ENCODE measurements at regions of chr9 and their contacts with region 1.

Region 1: GRCh38 chr9:132800038-132800648 is 77.9 kb downstream of the AK8 start:
- DNase-seq: peak; percentile 60 to 72
- H3K4me3 ChIP-seq: no peak overlapping the region
- H3K4me3 Mint-ChIP-seq: no peak overlapping the region
- H3K27ac Mint-ChIP-seq: no peak overlapping the region
- H3K4me1 ChIP-seq: 0 out of 2 replicates have a peak, but pooled peaks cover 5% of the 10 kb centered on the region
- H3K4me1 Mint-ChIP-seq: no peaks in the 10 kb centered on the region
- H3K27me3 ChIP-seq: no peaks in the 10 kb centered on the region
- H3K27me3 Mint-ChIP-seq: peaks cover 3% of the 10 kb centered on the region
- CTCF ChIP-seq: peak; percentile 81 to 92

Region 2: GRCh38 chr9:132575005-132575609 is 225.0 kb before region 1 on chr9:
- CTCF ChIA-PET with region 1: no interaction called
- POLR2A ChIA-PET with region 1: no interaction called
- intact Hi-C with region 1: loop called (anchors 5 kb)
- DNase-seq: peak; percentile 82 to 85
- H3K4me3 ChIP-seq: no peak overlapping the region
- H3K4me3 Mint-ChIP-seq: no peak overlapping the region
- H3K27ac Mint-ChIP-seq: no peak overlapping the region
- H3K4me1 ChIP-seq: no peaks in the 10 kb centered on the region
- H3K4me1 Mint-ChIP-seq: no peaks in the 10 kb centered on the region
- H3K27me3 ChIP-seq: no peaks in the 10 kb centered on the region
- H3K27me3 Mint-ChIP-seq: peaks cover 26% of the 10 kb centered on the region
- CTCF ChIP-seq: peak; percentile 82 to 86

Region 3: GRCh38 chr9:132673365-132673764 is 126.8 kb before region 1 on chr9:
- CTCF ChIA-PET with region 1: interaction called, 3 read pairs
- POLR2A ChIA-PET with region 1: no interaction called
- intact Hi-C with region 1: loop called (anchors 2 kb)
- DNase-seq: peak; percentile 39 to 55
- H3K4me3 ChIP-seq: no peak overlapping the region
- H3K4me3 Mint-ChIP-seq: peak overlapping the region; percentile 34
- H3K27ac Mint-ChIP-seq: no peak overlapping the region
- H3K4me1 ChIP-seq: peaks cover 9% of the 10 kb centered on the region; the same call in 1 of the 2 replicates
- H3K4me1 Mint-ChIP-seq: peaks cover 17% of the 10 kb centered on the region
- H3K27me3 ChIP-seq: no peaks in the 10 kb centered on the region
- H3K27me3 Mint-ChIP-seq: no peaks in the 10 kb centered on the region
- CTCF ChIP-seq: peak; percentile 2 to 19

Region 4: DNA sequence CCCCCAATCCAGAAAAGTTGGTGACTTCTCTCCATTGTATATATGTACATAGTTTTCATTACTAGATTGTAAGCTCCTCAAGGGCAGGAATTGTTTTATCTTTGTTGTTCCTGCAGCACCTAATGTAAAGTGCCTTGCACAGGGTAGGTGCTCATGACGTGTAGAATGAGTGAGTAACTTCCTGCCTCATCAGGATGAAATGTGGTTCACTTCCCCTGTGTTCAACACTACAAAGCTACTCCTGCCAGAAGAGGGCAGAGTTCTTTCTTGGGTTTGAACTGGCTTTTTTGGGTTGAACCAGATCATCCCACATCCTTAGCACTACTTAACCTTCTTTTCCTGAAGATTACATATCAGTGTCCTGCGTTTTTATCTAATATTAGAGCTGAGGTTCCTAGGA is 106.0 kb before region 1 on chr9:
- CTCF ChIA-PET with region 1: no interaction called
- POLR2A ChIA-PET with region 1: no interaction called
- intact Hi-C with region 1: loop called (anchors 1 kb)
- DNase-seq: peak in 1 of 2 experiments; percentile 10
- H3K4me3 ChIP-seq: no peak overlapping the region
- H3K4me3 Mint-ChIP-seq: no peak overlapping the region
- H3K27ac Mint-ChIP-seq: no peak overlapping the region
- H3K4me1 ChIP-seq: no peaks in the 10 kb centered on the region
- H3K4me1 Mint-ChIP-seq: no peaks in the 10 kb centered on the region
- H3K27me3 ChIP-seq: no peaks in the 10 kb centered on the region
- H3K27me3 Mint-ChIP-seq: no peaks in the 10 kb centered on the region
- CTCF ChIP-seq: no peak

Region 5: GRCh38 chr9:132820169-132820944 is 20.2 kb after region 1 on chr9:
- CTCF ChIA-PET with region 1: no interaction called
- POLR2A ChIA-PET with region 1: no interaction called
- intact Hi-C with region 1: no loop called
- DNase-seq: no peak
- H3K4me3 ChIP-seq: no peak overlapping the region
- H3K4me3 Mint-ChIP-seq: no peak overlapping the region
- H3K27ac Mint-ChIP-seq: no peak overlapping the region
- H3K4me1 ChIP-seq: no peaks in the 10 kb centered on the region
- H3K4me1 Mint-ChIP-seq: no peaks in the 10 kb centered on the region
- H3K27me3 ChIP-seq: no peaks in the 10 kb centered on the region
- H3K27me3 Mint-ChIP-seq: peaks cover 25% of the 10 kb centered on the region
- CTCF ChIP-seq: no peak

Region 6: DNA sequence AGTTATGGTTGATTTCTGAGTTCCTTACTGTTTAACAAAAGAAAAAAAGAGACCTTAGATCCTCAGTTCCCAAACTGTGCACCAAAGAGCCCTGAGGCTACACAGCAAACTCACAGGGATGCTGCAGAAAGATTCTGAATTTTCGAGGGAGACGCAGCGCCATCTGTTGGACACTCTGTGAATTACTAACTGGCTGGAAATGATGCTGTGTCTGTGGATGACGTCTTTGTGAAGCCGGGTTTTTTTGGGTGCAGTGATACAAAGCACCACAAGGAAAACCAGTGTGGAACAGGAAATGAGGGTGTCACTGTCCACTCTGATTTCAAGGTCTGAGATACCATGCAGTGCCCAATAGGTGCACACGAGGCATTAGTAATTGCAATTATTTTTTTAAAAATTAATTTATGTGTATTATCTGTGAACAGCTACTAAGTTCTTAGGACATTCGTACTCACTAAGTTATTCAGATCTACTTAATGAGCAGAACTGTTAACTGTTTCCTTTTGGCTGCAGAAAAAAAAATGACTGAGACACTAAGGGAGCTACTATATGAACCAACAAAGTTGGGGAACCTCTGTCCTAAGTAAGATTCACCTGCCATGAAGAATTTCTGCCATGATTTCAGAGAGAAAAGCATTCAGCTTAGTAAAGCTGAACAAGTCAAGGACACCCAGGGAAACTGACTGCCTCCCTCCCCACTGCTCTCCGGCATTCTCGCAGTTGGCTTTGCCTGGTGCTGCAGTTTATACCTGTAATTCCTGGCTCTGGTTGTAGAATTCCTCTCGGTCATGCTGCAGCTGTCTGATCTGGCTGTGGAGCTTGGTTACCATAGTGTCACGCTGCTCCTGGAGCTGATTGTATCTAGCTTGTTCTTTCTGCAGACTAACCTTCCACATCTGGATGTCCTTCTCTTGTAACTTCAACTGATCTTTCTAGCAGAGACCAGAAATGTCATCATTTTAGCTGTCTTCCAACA is 102.0 kb after region 1 on chr9:
- CTCF ChIA-PET with region 1: no interaction called
- POLR2A ChIA-PET with region 1: no interaction called
- intact Hi-C with region 1: loop called (anchors 5 kb)
- DNase-seq: peak; percentile 79 to 83
- H3K4me3 ChIP-seq: no peak overlapping the region
- H3K4me3 Mint-ChIP-seq: no peak overlapping the region
- H3K27ac Mint-ChIP-seq: no peak overlapping the region
- H3K4me1 ChIP-seq: no peaks in the 10 kb centered on the region
- H3K4me1 Mint-ChIP-seq: no peaks in the 10 kb centered on the region
- H3K27me3 ChIP-seq: no peaks in the 10 kb centered on the region
- H3K27me3 Mint-ChIP-seq: no peaks in the 10 kb centered on the region
- CTCF ChIP-seq: peak; percentile 80 to 90

Region 7: DNA sequence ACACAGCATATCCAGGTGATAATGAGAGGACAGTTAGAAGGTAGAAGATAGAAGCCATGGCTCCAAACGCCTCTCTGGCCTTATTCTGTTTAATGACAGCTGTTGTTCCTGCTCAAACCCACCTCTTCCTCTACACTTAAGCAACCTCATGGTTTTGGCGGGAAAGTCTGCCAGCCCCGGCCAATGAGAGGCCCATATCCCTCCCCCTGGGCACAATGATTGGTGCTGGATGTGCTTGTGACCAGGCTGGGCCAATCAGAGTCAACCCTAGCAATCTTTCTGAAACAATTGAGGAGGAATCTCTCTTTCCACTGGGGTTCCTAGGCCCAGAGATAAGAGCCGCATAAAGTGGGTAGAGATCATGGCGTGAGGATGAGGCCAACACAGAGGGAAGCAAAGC is 173.6 kb after region 1 on chr9:
- CTCF ChIA-PET with region 1: no interaction called
- POLR2A ChIA-PET with region 1: no interaction called
- intact Hi-C with region 1: loop called (anchors 5 kb)
- DNase-seq: peak; percentile 38 to 68
- H3K4me3 ChIP-seq: no peak overlapping the region
- H3K4me3 Mint-ChIP-seq: no peak overlapping the region
- H3K27ac Mint-ChIP-seq: no peak overlapping the region
- H3K4me1 ChIP-seq: peaks cover 27% of the 10 kb centered on the region
- H3K4me1 Mint-ChIP-seq: peaks cover 7% of the 10 kb centered on the region
- H3K27me3 ChIP-seq: no peaks in the 10 kb centered on the region
- H3K27me3 Mint-ChIP-seq: peaks cover 3% of the 10 kb centered on the region
- CTCF ChIP-seq: no peak

Region 8: DNA sequence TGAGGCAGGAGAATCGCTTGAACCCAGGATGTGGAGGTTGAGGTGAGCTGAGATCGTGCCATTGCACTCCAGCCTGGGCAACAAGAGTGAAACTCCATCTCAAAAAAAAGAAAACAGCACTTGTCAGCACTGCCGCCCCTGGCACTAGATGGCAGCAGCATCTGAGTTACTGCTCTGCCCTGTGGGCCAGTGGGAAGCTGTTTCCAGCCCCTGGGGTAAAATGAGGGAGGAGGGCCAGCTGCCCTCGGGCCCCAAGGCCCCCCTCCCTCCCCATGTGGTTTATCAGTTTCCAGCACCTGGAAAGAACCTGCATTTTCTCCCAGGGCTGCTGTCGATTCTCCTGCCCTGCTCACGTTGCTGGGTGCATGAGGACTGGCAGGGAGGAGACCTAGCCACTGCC is 248.4 kb after region 1 on chr9:
- CTCF ChIA-PET with region 1: no interaction called
- POLR2A ChIA-PET with region 1: no interaction called
- intact Hi-C with region 1: no loop called
- DNase-seq: no peak
- H3K4me3 ChIP-seq: no peak overlapping the region
- H3K4me3 Mint-ChIP-seq: no peak overlapping the region
- H3K27ac Mint-ChIP-seq: no peak overlapping the region
- H3K4me1 ChIP-seq: no peaks in the 10 kb centered on the region
- H3K4me1 Mint-ChIP-seq: peaks cover 6% of the 10 kb centered on the region
- H3K27me3 ChIP-seq: no peaks in the 10 kb centered on the region
- H3K27me3 Mint-ChIP-seq: no peaks in the 10 kb centered on the region
- CTCF ChIP-seq: peak; percentile 33 to 51